Pancreas (tissue), 10 donors: ENCODE measurements at regions of chr5 and their contacts with region 1.

Region 1: GRCh38 chr5:64147849-64148441 is 17.7 kb upstream of the RNF180 start:
- DNase-seq: peak; percentile 41 to 73 (median 60)
- ATAC-seq: peak; percentile 66 to 92 (median 90)
- H3K4me3 ChIP-seq: no peak overlapping the region
- H3K27ac ChIP-seq: no peak overlapping the region
- H3K4me1 ChIP-seq: no peaks in the 10 kb centered on the region
- H3K27me3 ChIP-seq: no peaks in the 10 kb centered on the region
- CTCF ChIP-seq: peak; percentile 40 to 63 (median 54)

Region 2: GRCh38 chr5:64207978-64208377 is 60.0 kb after region 1 on chr5:
- intact Hi-C with region 1: loop called in 1 of 3 experiments (anchors 10 kb)
- DNase-seq: no peak
- ATAC-seq: no peak
- H3K4me3 ChIP-seq: no peak overlapping the region
- H3K27ac ChIP-seq: no peak overlapping the region
- H3K4me1 ChIP-seq: peaks cover 0 to 6% (median 3%) of the 10 kb centered on the region in 3 donors
- H3K27me3 ChIP-seq: no peaks in the 10 kb centered on the region
- CTCF ChIP-seq: no peak

Region 3: GRCh38 chr5:64612344-64612961 is 464.5 kb after region 1 on chr5:
- intact Hi-C with region 1: loop called in 1 of 3 experiments (anchors 5 kb)
- DNase-seq: peak in 2 of 6 donors; percentile 20 to 40
- ATAC-seq: peak; percentile 53 to 84 (median 81)
- H3K4me3 ChIP-seq: no peak overlapping the region
- H3K27ac ChIP-seq: no peak overlapping the region
- H3K4me1 ChIP-seq: peaks cover 0 to 5% (median 0%) of the 10 kb centered on the region in 3 donors
- H3K27me3 ChIP-seq: peaks cover 0 to 9% (median 0%) of the 10 kb centered on the region in 4 donors
- CTCF ChIP-seq: peak; percentile 19 to 51 (median 38)